Motor neuron (in vitro differentiated cells): ENCODE measurements at regions of chr3 and their contacts with region 1.

Region 1: DNA sequence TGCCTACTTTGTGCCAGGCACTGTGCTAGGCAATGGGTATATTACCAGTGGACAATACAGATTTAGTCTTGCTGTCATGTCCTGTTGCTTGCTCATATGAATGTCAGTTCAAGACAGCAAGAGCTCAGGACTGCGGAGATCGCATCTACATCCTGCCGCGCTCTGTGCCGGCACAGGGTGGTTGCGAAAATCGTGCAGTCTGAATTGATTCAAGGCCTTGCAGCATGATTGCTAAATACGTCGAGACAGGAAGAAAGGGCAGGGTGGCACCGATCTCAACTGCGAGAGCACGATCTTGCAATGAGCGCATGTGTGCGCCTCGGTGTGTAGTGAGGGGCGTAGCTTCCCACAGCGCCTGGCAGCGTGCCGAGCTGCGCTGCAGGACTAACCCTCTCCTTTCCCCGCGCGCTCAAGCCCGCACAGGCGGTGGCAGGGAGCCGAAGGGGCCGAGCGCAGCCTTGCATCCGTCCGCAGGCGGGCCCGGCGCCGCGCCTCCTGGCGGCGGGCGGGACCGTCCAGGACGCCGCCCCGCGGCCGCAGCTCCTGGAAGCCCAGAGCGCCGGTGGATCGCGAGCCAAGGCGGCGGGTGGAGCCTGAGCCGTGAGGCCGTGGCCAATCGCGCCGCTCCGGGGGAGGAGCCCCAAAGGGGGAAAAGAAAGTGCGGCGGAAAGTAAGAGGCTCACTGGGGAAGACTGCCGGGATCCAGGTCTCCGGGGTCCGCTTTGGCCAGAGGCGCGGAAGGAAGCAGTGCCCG is at the start of gene IL1RAP:
- ATAC-seq: peak; percentile 86 to 97 (median 94)
- H3K4me3 ChIP-seq: peak within 1 kb of the TSS; percentile 43 to 59 (median 57)
- H3K27ac ChIP-seq: peak within 1 kb of the TSS in 1 of 2 donors; percentile 51
- H3K4me1 ChIP-seq: peaks cover 0 to 3% of the 10 kb centered on the region in 2 donors
- total RNA-seq, gene IL1RAP: 1.9 to 31.3 (median 4.1) TPM

Region 2: DNA sequence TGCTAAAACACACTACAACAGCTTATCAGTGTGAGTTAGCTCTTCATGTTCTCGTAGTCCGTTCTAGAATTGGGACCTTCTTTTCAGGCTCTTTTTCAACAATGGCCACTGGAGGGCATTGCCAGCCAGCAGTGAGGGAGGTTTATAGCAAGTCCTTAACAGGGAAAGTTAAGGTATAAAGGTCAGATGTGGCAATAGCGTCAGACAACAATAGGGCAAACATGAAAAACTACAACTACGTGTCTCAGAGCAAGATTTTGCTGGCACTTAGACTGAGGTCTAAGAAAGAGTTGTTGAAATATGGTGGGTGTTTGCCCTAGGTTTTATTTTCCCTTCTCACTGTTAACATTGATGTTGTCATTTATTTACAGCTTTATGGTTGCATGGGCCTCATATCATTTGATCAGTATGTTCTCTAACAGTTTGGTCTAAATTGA is 187.5 kb after region 1 on chr3:
- in situ Hi-C with region 1: loop called in 1 of 9 experiments (anchors 25 kb)
- ATAC-seq: peak; percentile 27 to 77 (median 62)
- H3K4me3 ChIP-seq: no peak overlapping the region
- H3K27ac ChIP-seq: no peak overlapping the region
- H3K4me1 ChIP-seq: peaks cover 0 to 3% of the 10 kb centered on the region in 2 donors